Aorta (tissue), 5 donors: ENCODE measurements at regions of chr4 and their contacts with region 1.

Region 1: GRCh38 chr4:41369697-41370096 is 113.0 kb downstream of the UCHL1 start:
- DNase-seq: peak; percentile 84 to 87
- ATAC-seq: peak; percentile 83
- H3K4me3 ChIP-seq: no peak overlapping the region
- H3K27ac ChIP-seq: peak overlapping the region; percentile 32 to 69
- H3K4me1 ChIP-seq: peaks cover 6 to 21% of the 10 kb centered on the region in 2 donors
- H3K27me3 ChIP-seq: no peaks in the 10 kb centered on the region

Region 2: GRCh38 chr4:41160012-41160789 is 209.5 kb before region 1 on chr4:
- intact Hi-C with region 1: no loop called
- DNase-seq: no peak
- ATAC-seq: peak; percentile 50
- H3K4me3 ChIP-seq: no peak overlapping the region
- H3K27ac ChIP-seq: no peak overlapping the region
- H3K4me1 ChIP-seq: peaks cover 1 to 7% of the 10 kb centered on the region in 2 donors
- H3K27me3 ChIP-seq: no peaks in the 10 kb centered on the region

Region 3: GRCh38 chr4:41427306-41427882 is 57.7 kb after region 1 on chr4:
- intact Hi-C with region 1: loop called in 1 of 2 experiments (anchors 5 kb)
- DNase-seq: no peak
- ATAC-seq: peak; percentile 39
- H3K4me3 ChIP-seq: no peak overlapping the region
- H3K27ac ChIP-seq: peak overlapping the region; percentile 79 to 92
- H3K4me1 ChIP-seq: peaks cover 14 to 15% of the 10 kb centered on the region in 2 donors
- H3K27me3 ChIP-seq: no peaks in the 10 kb centered on the region